Mammary epithelial cell (primary cell): ENCODE measurements at regions of chrX and their contacts with region 1.

Region 1: DNA sequence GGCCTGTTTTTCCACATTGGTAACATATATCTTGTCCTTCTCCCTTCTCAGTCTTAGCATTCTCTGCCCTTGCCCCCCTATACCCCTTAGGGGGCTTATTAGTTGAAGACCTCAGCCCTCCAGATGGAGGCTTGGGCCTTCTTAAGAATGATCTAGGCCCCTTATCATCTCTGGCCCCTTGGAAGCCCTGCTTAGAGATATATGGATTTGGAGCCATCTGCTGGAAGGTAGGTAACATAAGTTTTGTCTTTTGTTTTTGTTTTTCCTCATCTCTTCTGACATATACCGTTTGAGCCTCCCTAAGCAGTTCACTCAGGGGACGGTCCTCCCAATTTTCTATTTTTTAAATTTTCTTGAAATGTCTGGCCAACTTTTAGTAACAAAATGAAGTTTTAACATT is 48.3 kb upstream of the NAP1L2 start:
- DNase-seq: no peak
- H3K4me3 ChIP-seq: no peak overlapping the region
- H3K27ac ChIP-seq: no peak overlapping the region
- H3K4me1 ChIP-seq: peaks cover 6% of the 10 kb centered on the region
- H3K27me3 ChIP-seq: peaks cover 5% of the 10 kb centered on the region
- CTCF ChIP-seq: peak; percentile 11 to 52

Region 2: DNA sequence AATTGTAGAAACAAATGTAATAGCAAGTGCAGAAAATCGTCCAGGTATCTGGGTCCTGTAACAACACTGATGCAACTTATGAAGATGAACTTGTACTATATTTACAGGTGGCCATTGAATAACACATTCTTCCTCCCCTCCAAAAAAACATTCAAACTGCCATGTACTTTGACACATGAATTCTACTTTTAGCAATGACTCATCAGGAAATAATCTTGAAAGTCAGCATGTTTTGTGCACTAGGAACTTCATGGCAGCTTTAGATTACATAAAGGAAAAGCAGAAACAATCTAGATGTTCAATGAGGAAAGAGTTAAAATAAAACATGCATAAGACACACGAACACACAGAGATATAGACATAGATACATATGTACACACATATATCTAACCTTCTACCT is 186.2 kb before region 1 on chrX:
- CTCF ChIA-PET with region 1: no interaction called
- dilution Hi-C with region 1: no loop called
- in situ Hi-C with region 1: no loop called
- intact Hi-C with region 1: loop called (anchors 10 kb)
- DNase-seq: no peak
- H3K4me3 ChIP-seq: no peak overlapping the region
- H3K27ac ChIP-seq: no peak overlapping the region
- H3K4me1 ChIP-seq: no peaks in the 10 kb centered on the region
- H3K27me3 ChIP-seq: peaks cover 3% of the 10 kb centered on the region
- CTCF ChIP-seq: no peak